Activated CD4-positive, alpha-beta T cell treated with anti-CD3 and anti-CD28 coated beads, Interleukin-2, amount 10 ng/mL, durations not matched to agents 24 days and 14 days (primary cell): ENCODE measurements at regions of chr6 and their contacts with region 1.

Region 1: DNA sequence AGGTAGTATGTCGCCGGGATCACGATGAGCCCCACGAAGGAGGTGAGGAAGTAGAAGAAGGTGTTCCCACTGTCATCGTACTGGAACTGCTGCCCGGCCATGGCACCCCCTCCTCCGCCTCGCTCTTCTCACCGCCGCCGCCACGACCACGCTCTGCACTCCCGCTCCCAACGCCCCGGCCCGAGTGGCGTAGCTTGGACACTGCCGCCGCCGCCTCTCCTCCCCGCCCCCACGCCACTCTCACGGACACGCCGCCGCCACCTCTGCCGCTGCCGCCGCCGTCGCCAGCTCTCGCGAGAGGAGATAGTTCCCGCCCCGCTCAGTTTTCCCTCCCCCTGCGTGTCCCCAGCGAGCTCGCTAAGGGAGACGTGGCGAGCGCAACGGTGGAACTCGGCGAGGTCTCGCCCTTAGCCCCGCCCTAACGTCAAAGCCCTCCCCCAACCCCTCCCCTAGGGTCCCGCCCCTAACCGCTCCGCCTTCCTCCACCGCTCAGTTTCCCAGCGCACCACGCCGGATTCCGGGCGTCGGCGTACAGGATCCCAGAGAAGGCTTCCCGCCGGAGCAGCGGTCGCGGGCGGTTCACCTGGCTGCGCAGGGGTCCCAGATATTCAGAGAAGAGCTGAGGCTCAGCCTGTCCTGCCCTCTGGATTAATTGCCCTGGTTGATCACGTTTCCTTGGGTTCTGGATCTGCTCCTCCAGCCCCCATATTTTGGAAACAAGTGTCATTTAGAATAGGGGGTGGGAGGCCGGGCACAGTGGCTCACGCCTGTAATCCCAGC is at the start of gene SEC63:
- DNase-seq: peak; percentile 99
- H3K4me3 Mint-ChIP-seq: peak within 1 kb of the TSS; percentile 98
- H3K27ac Mint-ChIP-seq: peak within 1 kb of the TSS; percentile 99
- H3K4me1 Mint-ChIP-seq: peaks cover 22% of the 10 kb centered on the region
- H3K27me3 Mint-ChIP-seq: peaks cover 5% of the 10 kb centered on the region
- total RNA-seq, gene SEC63: 91.8 and 94.4 TPM in 2 replicates

Region 2: GRCh38 chr6:107459283-107460082 is 498.6 kb before region 1 on chr6 and contains the start of gene PDSS2:
- intact Hi-C with region 1: loop called (anchors 5 kb)
- DNase-seq: peak; percentile 99
- H3K4me3 Mint-ChIP-seq: peak within 1 kb of the TSS; percentile 97
- H3K27ac Mint-ChIP-seq: peak within 1 kb of the TSS; percentile 95
- H3K4me1 Mint-ChIP-seq: peaks cover 21% of the 10 kb centered on the region
- H3K27me3 Mint-ChIP-seq: peaks cover 7% of the 10 kb centered on the region
- total RNA-seq, gene PDSS2: 13.3 and 14.2 TPM in 2 replicates

Region 3: DNA sequence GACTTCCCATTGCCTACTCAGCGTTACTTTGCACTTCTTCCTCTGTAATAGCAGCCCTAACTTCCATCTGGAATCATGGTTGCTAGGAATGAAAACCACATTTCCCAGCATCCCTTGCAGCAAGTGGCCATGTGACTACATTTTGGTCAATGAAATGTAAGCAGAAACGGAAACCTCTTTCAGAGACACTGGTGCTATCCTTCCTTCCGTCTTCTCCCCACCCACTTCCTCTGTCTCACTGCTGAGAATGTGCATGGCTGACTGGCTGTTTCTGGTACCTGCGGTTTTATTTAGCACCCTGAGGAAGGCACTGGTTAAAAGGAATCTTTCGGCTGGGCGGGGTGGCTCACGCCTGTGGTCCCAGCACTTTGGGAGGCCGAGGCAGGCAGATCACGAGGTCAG is 241.4 kb before region 1 on chr6:
- intact Hi-C with region 1: loop called (anchors 5 kb)
- DNase-seq: peak; percentile 93
- H3K4me3 Mint-ChIP-seq: peak overlapping the region; percentile 71
- H3K27ac Mint-ChIP-seq: peak overlapping the region; percentile 85
- H3K4me1 Mint-ChIP-seq: peaks cover 52% of the 10 kb centered on the region
- H3K27me3 Mint-ChIP-seq: no peaks in the 10 kb centered on the region

Region 4: DNA sequence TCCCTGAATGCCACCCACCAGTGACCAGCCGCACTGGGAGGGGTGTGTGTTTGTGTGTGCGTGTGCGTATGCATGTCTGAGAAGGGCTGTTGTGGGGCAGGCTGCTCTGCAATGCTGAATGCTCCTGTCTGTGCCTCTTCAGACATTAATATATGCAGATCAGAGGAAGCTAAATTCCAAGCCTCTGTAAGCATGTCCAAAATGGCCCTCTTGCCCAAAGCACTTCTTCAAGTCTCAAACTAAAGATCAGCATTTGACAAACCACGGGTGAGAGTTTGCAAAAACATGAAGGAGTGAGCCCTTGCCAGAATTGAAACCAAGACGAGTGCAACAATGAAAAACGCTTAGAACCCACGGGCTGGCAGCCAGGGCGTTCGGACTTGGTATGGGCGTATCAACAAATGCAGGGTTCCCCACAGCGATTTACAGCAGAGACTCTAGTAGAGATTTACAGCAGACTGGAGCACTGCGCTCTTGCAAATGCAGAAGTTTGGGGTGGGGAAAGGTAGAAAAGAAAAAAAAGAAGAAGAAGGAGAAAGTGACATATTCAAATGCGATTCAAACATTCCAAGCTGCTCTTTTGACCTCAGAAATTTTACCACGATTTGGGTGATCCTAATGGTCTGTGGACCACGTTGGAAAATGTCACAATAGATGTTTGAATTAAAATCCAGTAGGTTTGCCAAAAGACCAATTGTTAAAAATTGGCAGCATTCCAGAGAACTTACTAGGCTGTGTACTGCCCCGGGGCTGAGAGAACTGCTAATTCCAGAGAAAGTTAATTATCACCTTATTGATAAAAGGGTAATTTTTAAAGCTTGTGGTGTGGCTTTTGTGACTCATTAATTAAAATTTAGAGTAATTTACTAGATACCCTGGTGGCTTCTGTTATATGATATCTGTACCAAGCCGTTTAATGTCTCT is 137.5 kb before region 1 on chr6:
- intact Hi-C with region 1: loop called (anchors 5 kb)
- DNase-seq: peak; percentile 86
- H3K4me3 Mint-ChIP-seq: peak overlapping the region; percentile 80
- H3K27ac Mint-ChIP-seq: peak overlapping the region; percentile 95
- H3K4me1 Mint-ChIP-seq: peaks cover 82% of the 10 kb centered on the region
- H3K27me3 Mint-ChIP-seq: no peaks in the 10 kb centered on the region

Region 5: GRCh38 chr6:107877968-107878367 is 80.1 kb before region 1 on chr6:
- intact Hi-C with region 1: no loop called
- DNase-seq: no peak
- H3K4me3 Mint-ChIP-seq: no peak overlapping the region
- H3K27ac Mint-ChIP-seq: no peak overlapping the region
- H3K4me1 Mint-ChIP-seq: peaks cover 3% of the 10 kb centered on the region
- H3K27me3 Mint-ChIP-seq: no peaks in the 10 kb centered on the region

Region 6: DNA sequence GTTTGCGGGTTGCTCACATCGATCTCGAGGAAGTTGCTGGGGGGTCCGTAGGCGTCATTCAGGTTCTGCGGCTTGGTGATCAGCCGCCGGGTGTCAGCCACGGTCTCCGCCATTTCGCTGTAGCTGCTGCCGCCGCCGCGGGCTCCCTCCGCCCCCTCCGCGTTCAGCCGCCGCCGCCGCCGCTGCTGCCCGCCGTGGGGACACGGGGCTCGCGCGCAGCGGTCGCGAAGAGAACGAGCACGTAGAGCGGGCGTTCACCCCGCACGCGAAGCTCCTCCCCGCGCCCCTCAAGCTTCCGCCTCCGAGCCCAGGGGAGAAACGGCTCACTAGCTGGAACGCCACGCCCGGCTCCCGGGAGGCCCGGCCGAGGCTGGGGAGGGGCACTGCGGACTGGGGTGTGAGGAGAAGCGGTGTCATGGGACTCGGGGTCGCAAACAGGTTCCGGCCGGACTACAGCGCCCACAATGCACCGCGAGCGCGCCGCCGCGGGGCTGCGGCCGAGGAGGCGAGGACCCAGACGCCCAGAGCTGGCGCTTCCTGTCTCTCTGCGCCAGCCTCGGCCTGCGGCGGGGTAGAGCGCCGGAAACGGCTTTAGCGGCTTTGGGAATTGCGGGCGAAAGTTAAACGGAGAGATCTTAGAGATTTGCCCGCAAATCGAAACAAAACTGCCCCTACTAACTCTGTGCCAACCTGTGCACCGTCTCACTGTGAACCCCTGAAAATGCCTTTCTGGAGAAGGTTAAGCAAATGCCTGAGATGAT is 302.9 kb after region 1 on chr6 and contains the start of gene SNX3:
- intact Hi-C with region 1: loop called (anchors 2 kb)
- DNase-seq: peak; percentile 97
- H3K4me3 Mint-ChIP-seq: peak within 1 kb of the TSS; percentile 86
- H3K27ac Mint-ChIP-seq: peak within 1 kb of the TSS; percentile 89
- H3K4me1 Mint-ChIP-seq: peaks cover 18% of the 10 kb centered on the region
- H3K27me3 Mint-ChIP-seq: peaks cover 9% of the 10 kb centered on the region
- total RNA-seq, gene SNX3: 75.1 and 78.0 TPM in 2 replicates

Region 7: DNA sequence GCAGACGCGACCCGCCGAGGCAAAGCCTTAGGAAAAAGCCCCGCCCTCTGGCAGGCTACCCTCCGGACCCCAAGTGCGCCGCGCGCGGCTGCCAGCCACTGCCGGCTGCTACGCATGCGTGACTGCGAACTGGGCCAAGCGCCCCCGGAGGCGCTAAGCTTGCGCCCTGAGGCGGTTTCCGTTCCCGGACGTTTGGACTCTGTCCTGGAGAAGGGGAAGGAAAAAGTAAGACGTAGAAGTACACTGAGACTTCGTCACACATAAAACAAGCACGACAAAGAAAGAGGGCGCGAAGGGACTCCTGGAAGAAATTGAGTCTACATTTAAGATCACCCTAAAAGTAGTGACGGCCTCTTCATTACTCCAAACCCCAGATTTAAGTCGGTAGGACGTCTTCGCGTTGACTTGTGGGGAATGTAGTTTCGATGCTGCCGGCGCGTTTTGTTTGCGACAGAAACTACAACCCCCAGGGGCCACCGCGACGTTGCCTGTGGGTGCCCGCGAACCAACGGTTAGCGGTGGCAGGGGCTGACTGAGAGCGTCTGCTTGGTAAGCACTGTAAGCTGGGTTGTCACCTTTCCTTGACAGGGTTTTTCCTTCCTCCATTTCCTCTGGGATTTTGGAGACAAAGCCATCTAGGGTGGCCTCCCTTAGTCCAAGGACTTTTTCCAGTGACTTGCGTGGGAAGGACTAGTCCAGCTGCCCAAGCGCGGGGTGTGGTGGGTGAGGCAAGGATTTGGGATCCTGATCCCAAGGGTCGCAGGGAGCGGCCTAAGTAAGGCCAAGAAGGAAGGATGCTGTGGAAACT is 1137.1 kb after region 1 on chr6 and contains the start of gene CEP57L1:
- intact Hi-C with region 1: loop called (anchors 10 kb)
- DNase-seq: peak; percentile 98
- H3K4me3 Mint-ChIP-seq: peak within 1 kb of the TSS; percentile 90
- H3K27ac Mint-ChIP-seq: peak within 1 kb of the TSS; percentile 100
- H3K4me1 Mint-ChIP-seq: peaks cover 53% of the 10 kb centered on the region
- H3K27me3 Mint-ChIP-seq: no peaks in the 10 kb centered on the region
- total RNA-seq, gene CEP57L1: 14.2 and 15.3 TPM in 2 replicates